CD8-positive, alpha-beta memory T cell (primary cell): ENCODE measurements at regions of chr11 and their contacts with region 1.

Region 1: GRCh38 chr11:102007567-102008437 is 39.4 kb upstream of the CFAP300 start:
- DNase-seq: peak in 2 of 5 donors; percentile 33 to 36
- H3K4me3 ChIP-seq: no peak overlapping the region
- H3K4me3 Mint-ChIP-seq: no peak overlapping the region
- H3K27ac ChIP-seq: no peak overlapping the region
- H3K27ac Mint-ChIP-seq: no peak overlapping the region
- H3K4me1 ChIP-seq: no peaks in the 10 kb centered on the region
- H3K4me1 Mint-ChIP-seq: no peaks in the 10 kb centered on the region
- H3K27me3 ChIP-seq: no peaks in the 10 kb centered on the region
- H3K27me3 Mint-ChIP-seq: peaks cover 2 to 17% of the 10 kb centered on the region in 2 donors

Region 2: DNA sequence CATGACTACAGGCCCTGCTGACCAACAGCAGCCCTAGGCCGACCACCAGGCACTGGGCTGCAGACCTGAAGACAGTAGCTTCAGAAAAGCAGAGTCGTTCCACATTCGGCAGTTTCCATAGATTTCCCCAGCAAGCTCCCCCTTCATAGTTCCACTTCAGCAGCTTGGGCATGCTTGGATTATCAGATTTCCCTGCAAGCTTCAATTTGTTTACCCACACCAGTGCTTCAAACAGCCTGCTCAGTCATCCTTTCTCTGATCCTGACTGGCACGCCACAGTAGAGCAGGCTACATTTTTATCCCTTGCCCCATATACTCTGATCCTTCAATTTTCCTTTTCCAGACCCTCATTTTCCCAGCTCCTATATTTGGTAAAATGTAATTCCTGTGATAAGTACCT is 11.7 kb before region 1 on chr11:
- CTCF ChIA-PET with region 1: interaction called, 12 read pairs
- POLR2A ChIA-PET with region 1: no interaction called
- DNase-seq: no peak
- H3K4me3 ChIP-seq: no peak overlapping the region
- H3K4me3 Mint-ChIP-seq: no peak overlapping the region
- H3K27ac ChIP-seq: no peak overlapping the region
- H3K27ac Mint-ChIP-seq: no peak overlapping the region
- H3K4me1 ChIP-seq: no peaks in the 10 kb centered on the region
- H3K4me1 Mint-ChIP-seq: no peaks in the 10 kb centered on the region
- H3K27me3 ChIP-seq: no peaks in the 10 kb centered on the region
- H3K27me3 Mint-ChIP-seq: no peaks in the 10 kb centered on the region